Esophagus muscularis mucosa (tissue), 4 donors: ENCODE measurements at regions of chr15 and their contacts with region 1.

Region 1: GRCh38 chr15:39580117-39580484 is 778 bp upstream of the THBS1 start:
- DNase-seq: peak; percentile 98
- H3K4me3 ChIP-seq: peak overlapping the region; percentile 61 to 90 (median 77)
- H3K27ac ChIP-seq: peak overlapping the region; percentile 87 to 96 (median 94)
- H3K4me1 ChIP-seq: peaks cover 21 to 60% (median 57%) of the 10 kb centered on the region in 4 donors
- H3K27me3 ChIP-seq: peaks cover 0 to 3% (median 0%) of the 10 kb centered on the region in 4 donors
- CTCF ChIP-seq: peak; percentile 99 to 100 (median 99)
- EP300 ChIP-seq: no peak
- POLR2A ChIP-seq: no peak

Region 2: GRCh38 chr15:38699633-38700230 is 880.4 kb before region 1 on chr15:
- intact Hi-C with region 1: loop called (anchors 10 kb)
- DNase-seq: no peak
- H3K4me3 ChIP-seq: no peak overlapping the region
- H3K27ac ChIP-seq: no peak overlapping the region
- H3K4me1 ChIP-seq: peaks cover 0 to 5% (median 2%) of the 10 kb centered on the region in 4 donors
- H3K27me3 ChIP-seq: no peaks in the 10 kb centered on the region
- CTCF ChIP-seq: peak; percentile 60 to 78 (median 73)
- EP300 ChIP-seq: no peak
- POLR2A ChIP-seq: no peak

Region 3: DNA sequence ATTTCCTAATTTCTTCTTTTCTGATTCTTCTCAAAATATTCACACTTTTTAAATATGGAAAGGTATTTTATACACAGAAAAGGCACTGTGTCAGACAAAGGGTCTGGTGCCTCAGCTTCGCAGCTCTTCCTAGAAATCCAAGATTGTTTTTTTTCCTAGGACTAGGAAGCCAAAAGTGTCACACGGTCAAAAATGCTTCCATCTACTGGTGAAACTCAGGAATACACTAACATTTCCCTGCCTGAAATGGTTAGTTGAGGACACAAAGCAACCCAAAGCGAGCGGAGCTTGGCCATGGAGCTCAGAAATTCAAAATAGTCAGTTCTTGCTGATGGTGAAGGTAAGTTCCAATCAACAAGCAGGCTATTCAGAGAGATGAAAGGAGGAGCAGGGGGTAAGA is 589.0 kb before region 1 on chr15:
- intact Hi-C with region 1: loop called (anchors 10 kb)
- DNase-seq: no peak
- H3K4me3 ChIP-seq: no peak overlapping the region
- H3K27ac ChIP-seq: no peak overlapping the region
- H3K4me1 ChIP-seq: peaks cover 16 to 31% (median 24%) of the 10 kb centered on the region in 4 donors
- H3K27me3 ChIP-seq: no peaks in the 10 kb centered on the region
- CTCF ChIP-seq: peak; percentile 45 to 55 (median 54)
- EP300 ChIP-seq: no peak
- POLR2A ChIP-seq: no peak

Region 4: GRCh38 chr15:39171944-39172368 is 408.1 kb before region 1 on chr15:
- intact Hi-C with region 1: loop called (anchors 2 kb)
- DNase-seq: no peak
- H3K4me3 ChIP-seq: no peak overlapping the region
- H3K27ac ChIP-seq: peak overlapping the region; percentile 61 to 78 (median 66)
- H3K4me1 ChIP-seq: peaks cover 14 to 35% (median 31%) of the 10 kb centered on the region in 4 donors
- H3K27me3 ChIP-seq: no peaks in the 10 kb centered on the region
- CTCF ChIP-seq: peak; percentile 42 to 55 (median 45)
- EP300 ChIP-seq: no peak
- POLR2A ChIP-seq: no peak

Region 5: GRCh38 chr15:39465843-39466749 is 114.0 kb before region 1 on chr15:
- intact Hi-C with region 1: no loop called
- DNase-seq: peak; percentile 92
- H3K4me3 ChIP-seq: no peak overlapping the region
- H3K27ac ChIP-seq: peak overlapping the region; percentile 69 to 79 (median 70)
- H3K4me1 ChIP-seq: peaks cover 23 to 40% (median 36%) of the 10 kb centered on the region in 4 donors
- H3K27me3 ChIP-seq: no peaks in the 10 kb centered on the region
- CTCF ChIP-seq: peak in 1 of 3 experiments; percentile 7
- EP300 ChIP-seq: no peak
- POLR2A ChIP-seq: no peak

Region 6: DNA sequence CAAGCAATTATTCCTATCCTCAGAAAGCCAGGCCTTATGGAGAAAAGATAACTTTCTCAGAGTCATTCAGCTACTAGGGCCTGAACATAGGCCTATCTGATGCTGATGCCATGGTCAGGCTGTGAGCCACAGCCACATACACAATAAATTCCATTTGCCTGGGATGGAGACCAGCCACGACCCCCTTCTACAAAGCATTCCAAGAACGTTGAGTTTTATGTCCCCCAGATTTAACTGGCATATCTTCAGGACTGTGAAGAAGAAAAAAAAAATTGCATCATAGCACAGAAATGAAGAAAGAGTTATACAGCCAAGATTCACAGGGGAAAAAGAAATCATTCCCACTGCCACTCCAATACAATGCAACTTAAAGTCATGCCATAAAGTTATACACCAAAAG is 100.8 kb after region 1 on chr15:
- intact Hi-C with region 1: loop called (anchors 5 kb)
- DNase-seq: no peak
- H3K4me3 ChIP-seq: no peak overlapping the region
- H3K27ac ChIP-seq: peak overlapping the region; percentile 51 to 68 (median 64)
- H3K4me1 ChIP-seq: peaks cover 0 to 33% (median 26%) of the 10 kb centered on the region in 4 donors
- H3K27me3 ChIP-seq: no peaks in the 10 kb centered on the region
- CTCF ChIP-seq: no peak
- EP300 ChIP-seq: no peak
- POLR2A ChIP-seq: no peak